ENCODE measurements at regions of chr2 and their contacts with region 1.

Region 1: GRCh38 chr2:201396595-201396994 is 39.5 kb upstream of the FLACC1 start:
- DNase-seq: no peak
- ATAC-seq: no peak
- H3K4me3 ChIP-seq: no peak overlapping the region
- H3K27ac ChIP-seq: no peak overlapping the region
- H3K4me1 ChIP-seq: peaks cover 0 to 15% (median 10%) of the 10 kb centered on the region in 9 donors
- H3K27me3 ChIP-seq: no peaks in the 10 kb centered on the region
- CTCF ChIP-seq: no peak

Region 2: GRCh38 chr2:201432038-201432620 is 35.5 kb after region 1 on chr2:
- intact Hi-C with region 1: no loop called
- DNase-seq: no peak
- ATAC-seq: peak; percentile 29 to 82 (median 68)
- H3K4me3 ChIP-seq: peak overlapping the region in 3 of 10 donors; percentile 15 to 30 (median 28)
- H3K27ac ChIP-seq: peak overlapping the region; percentile 47 to 88 (median 83)
- H3K4me1 ChIP-seq: peaks cover 7 to 67% (median 53%) of the 10 kb centered on the region in 9 donors
- H3K27me3 ChIP-seq: no peaks in the 10 kb centered on the region
- CTCF ChIP-seq: no peak

Region 3: DNA sequence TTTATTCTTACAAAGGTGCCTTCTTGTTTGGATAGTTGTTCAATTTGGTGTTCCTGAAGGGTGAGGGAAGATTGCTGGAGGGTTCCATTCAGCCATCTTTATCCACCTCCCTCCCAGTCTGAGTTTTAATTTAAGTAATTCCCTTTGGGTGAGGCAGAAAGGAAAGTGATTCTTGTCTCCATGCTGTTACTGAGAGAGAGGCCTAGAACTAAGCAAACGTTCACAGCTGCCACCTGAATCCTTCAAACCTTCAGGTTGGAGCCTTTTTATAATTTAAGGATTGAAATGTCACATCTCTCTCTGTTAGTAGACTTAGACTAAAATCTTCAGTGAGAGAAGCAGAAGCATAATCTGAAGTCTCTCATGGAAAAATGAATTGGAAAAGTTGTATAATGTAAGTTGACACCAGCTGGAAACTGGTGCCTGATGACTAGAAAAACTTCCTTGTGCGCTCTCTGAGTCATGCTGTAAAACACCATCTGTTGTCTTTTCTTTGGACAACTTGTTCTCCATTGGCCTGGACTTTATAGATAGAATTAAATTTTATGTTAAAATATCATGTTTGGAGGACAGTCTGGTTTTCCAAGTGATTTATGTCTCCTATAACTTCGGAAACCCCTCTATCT is 69.6 kb after region 1 on chr2:
- intact Hi-C with region 1: loop called in 1 of 10 experiments (anchors 10 kb)
- DNase-seq: no peak
- ATAC-seq: peak in 7 of 8 donors; percentile 64 to 81 (median 79)
- H3K4me3 ChIP-seq: no peak overlapping the region
- H3K27ac ChIP-seq: peak overlapping the region in 9 of 10 donors; percentile 25 to 75 (median 61)
- H3K4me1 ChIP-seq: peaks cover 0 to 22% (median 11%) of the 10 kb centered on the region in 9 donors
- H3K27me3 ChIP-seq: no peaks in the 10 kb centered on the region
- CTCF ChIP-seq: no peak